SK-MEL-5 (cell line): ENCODE measurements at regions of chr13 and their contacts with region 1.

Region 1: GRCh38 chr13:41668130-41668757 is 210.9 kb downstream of the RGCC start:
- DNase-seq: peak; percentile 95

Region 2: DNA sequence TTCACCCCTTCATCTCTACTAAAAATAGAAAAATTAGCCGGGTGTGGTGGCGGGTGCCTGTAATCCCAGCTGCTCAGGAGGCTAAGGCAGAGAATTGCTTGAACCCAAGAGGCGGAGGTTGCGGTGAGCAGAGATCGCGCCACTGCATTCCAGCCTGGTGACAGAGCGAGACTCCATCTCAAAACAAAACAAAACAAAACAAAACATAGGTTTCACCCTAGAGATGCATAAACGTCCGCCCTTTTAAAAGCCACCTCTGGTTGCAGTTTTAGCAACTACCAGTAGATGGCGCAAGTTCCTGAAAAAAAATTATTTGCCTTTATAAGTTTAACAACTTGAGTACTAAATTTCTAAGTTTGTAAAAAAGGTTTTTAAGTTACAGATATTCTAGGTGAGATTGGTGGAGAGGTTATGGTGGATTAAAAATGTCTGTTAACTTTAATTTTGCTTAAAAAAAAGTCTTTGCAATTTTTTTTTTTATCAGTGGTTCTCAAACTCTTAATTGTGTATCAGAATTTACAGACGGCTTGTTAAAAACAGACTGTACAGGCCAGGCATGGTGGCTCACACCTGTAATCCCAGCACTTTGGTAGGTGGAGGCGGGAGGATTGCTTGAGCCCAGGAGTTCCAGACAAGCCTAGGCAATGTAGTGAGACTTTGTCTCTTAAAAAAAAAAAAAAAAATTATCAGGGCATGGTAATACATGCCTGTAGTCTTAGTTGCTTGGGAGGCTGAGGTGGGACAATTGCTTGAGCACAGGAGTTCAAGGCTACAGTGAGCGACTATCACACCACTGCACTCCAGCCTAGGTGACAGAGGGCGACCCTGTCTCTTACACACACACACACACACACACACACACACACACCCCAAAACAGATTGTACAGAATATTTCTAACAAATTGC is 315.1 kb before region 1 on chr13:
- in situ Hi-C with region 1: loop called (anchors 25 kb)
- DNase-seq: peak; percentile 57